ENCODE measurements at regions of chr11 and their contacts with region 1.

Region 1: GRCh38 chr11:20042118-20042518 is 118.2 kb downstream of the DBX1 start:
- DNase-seq: no peak
- H3K4me3 ChIP-seq: no peak overlapping the region
- H3K27ac ChIP-seq: no peak overlapping the region
- H3K4me1 ChIP-seq: no peaks in the 10 kb centered on the region
- H3K27me3 ChIP-seq: no peaks in the 10 kb centered on the region
- CTCF ChIP-seq: no peak
- EP300 ChIP-seq: no peak
- POLR2A ChIP-seq: no peak

Region 2: DNA sequence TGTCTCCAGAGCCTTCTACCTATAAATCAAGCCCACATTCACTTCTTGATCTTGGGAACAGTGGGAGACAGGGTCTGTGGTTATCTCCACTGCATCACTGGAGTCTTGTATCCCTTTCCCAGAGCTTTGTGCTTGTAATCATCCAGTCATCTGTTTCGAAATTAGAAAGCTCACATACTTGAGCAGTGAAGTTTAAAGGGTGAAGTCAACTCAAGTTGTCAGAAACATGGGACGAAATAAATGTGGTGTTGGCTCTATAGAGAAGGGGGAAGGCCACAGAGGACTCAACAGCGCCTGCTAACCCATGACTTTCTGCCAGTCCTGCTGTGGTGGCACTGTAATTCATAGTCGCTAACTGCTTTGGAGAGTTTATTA is 79.3 kb before region 1 on chr11:
- in situ Hi-C with region 1: no loop called
- intact Hi-C with region 1: loop called (anchors 10 kb)
- DNase-seq: no peak
- H3K4me3 ChIP-seq: no peak overlapping the region
- H3K27ac ChIP-seq: no peak overlapping the region
- H3K4me1 ChIP-seq: no peaks in the 10 kb centered on the region
- H3K27me3 ChIP-seq: no peaks in the 10 kb centered on the region
- CTCF ChIP-seq: no peak
- EP300 ChIP-seq: no peak
- POLR2A ChIP-seq: no peak